Endothelial cell of umbilical vein (primary cell): ENCODE measurements at regions of chr1 and their contacts with region 1.

Region 1: GRCh38 chr1:43473463-43473862 is 19.7 kb upstream of the HYI start:
- DNase-seq: peak; percentile 46
- H3K4me3 ChIP-seq: peak overlapping the region in 1 of 3 experiments; percentile 53
- H3K27ac ChIP-seq: peak overlapping the region; percentile 100
- H3K4me1 ChIP-seq: peaks cover 60% of the 10 kb centered on the region
- H3K27me3 ChIP-seq: no peaks in the 10 kb centered on the region
- CTCF ChIP-seq: no peak
- POLR2A ChIP-seq: no peak

Region 2: DNA sequence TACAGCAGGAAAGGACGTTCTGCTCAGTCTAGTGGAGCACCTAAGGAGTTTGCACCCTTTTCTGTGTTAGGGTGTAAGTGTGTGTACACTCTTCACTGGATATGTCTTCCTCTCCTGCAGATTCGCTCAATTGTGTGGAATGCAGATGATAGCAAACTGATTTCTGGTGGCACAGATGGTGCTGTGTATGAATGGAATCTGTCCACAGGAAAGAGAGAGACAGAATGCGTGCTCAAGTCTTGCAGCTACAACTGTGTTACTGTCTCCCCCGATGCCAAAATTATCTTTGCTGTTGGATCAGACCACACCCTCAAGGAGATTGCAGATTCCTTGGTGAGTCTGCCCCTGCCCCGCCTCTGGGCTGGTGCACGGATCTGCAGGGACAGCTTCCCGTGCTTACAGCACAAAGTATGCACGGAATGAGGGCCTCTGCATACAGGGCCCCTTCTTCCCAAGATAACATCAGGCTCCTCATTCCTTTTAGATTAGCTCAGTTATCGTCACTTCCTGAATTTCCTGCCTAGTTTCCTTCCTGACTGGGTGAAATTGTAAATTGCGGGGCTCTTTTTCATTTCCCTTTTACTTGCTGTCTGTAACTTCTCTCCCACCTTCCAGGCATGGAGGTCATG is 266.7 kb before region 1 on chr1:
- CTCF ChIA-PET with region 1: no interaction called
- POLR2A ChIA-PET with region 1: no interaction called
- dilution Hi-C with region 1: no loop called
- intact Hi-C with region 1: loop called (anchors 1 kb)
- DNase-seq: no peak
- H3K4me3 ChIP-seq: peak overlapping the region in 1 of 3 experiments; percentile 7
- H3K27ac ChIP-seq: peak overlapping the region; percentile 97
- H3K4me1 ChIP-seq: peaks cover 27% of the 10 kb centered on the region
- H3K27me3 ChIP-seq: no peaks in the 10 kb centered on the region
- CTCF ChIP-seq: no peak
- POLR2A ChIP-seq: peak; percentile 92

Region 3: GRCh38 chr1:43367904-43368645 is 105.4 kb before region 1 on chr1 and contains the start of gene ELOVL1:
- CTCF ChIA-PET with region 1: no interaction called
- POLR2A ChIA-PET with region 1: no interaction called
- dilution Hi-C with region 1: no loop called
- intact Hi-C with region 1: loop called (anchors 1 kb)
- DNase-seq: peak; percentile 89
- H3K4me3 ChIP-seq: peak within 1 kb of the TSS; percentile 70 to 85 (median 72)
- H3K27ac ChIP-seq: peak within 1 kb of the TSS; percentile 57
- H3K4me1 ChIP-seq: peaks cover 30% of the 10 kb centered on the region
- H3K27me3 ChIP-seq: no peaks in the 10 kb centered on the region
- CTCF ChIP-seq: peak in 1 of 2 donors; percentile 38
- POLR2A ChIP-seq: peak; percentile 98
- total RNA-seq, gene ELOVL1: 126 and 134 TPM in 2 replicates

Region 4: GRCh38 chr1:43565600-43566360 is 92.3 kb after region 1 on chr1:
- CTCF ChIA-PET with region 1: no interaction called
- POLR2A ChIA-PET with region 1: no interaction called
- dilution Hi-C with region 1: no loop called
- intact Hi-C with region 1: loop called (anchors 1 kb)
- DNase-seq: peak; percentile 29
- H3K4me3 ChIP-seq: peak overlapping the region in 1 of 3 experiments; percentile 26
- H3K27ac ChIP-seq: no peak overlapping the region
- H3K4me1 ChIP-seq: peaks cover 12% of the 10 kb centered on the region
- H3K27me3 ChIP-seq: no peaks in the 10 kb centered on the region
- CTCF ChIP-seq: no peak
- POLR2A ChIP-seq: no peak

Region 5: GRCh38 chr1:43706598-43707495 is 233.4 kb after region 1 on chr1:
- CTCF ChIA-PET with region 1: no interaction called
- POLR2A ChIA-PET with region 1: no interaction called
- dilution Hi-C with region 1: no loop called
- intact Hi-C with region 1: loop called (anchors 2 kb)
- DNase-seq: peak; percentile 92
- H3K4me3 ChIP-seq: peak overlapping the region in 2 of 3 experiments; percentile 36 to 56
- H3K27ac ChIP-seq: no peak overlapping the region
- H3K4me1 ChIP-seq: peaks cover 36% of the 10 kb centered on the region
- H3K27me3 ChIP-seq: no peaks in the 10 kb centered on the region
- CTCF ChIP-seq: no peak
- POLR2A ChIP-seq: peak; percentile 93

Region 6: DNA sequence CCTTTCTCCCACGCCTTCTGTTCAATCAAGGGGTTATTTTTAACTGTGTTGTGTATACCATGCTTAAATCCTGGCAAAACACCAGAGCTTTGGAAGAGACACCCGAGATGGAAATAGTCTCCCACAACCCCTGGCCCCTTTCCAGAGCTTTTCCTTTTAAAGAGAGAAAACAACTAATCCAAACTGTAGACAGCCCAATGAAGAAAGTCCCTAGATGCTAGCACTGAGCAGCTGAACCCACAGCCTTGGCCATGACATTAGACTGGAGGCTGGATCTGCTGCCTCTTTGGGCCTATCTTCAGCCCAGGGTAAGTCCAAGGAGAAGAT is 395.2 kb after region 1 on chr1:
- CTCF ChIA-PET with region 1: no interaction called
- POLR2A ChIA-PET with region 1: no interaction called
- dilution Hi-C with region 1: no loop called
- intact Hi-C with region 1: no loop called
- DNase-seq: peak; percentile 11
- H3K4me3 ChIP-seq: no peak overlapping the region
- H3K27ac ChIP-seq: no peak overlapping the region
- H3K4me1 ChIP-seq: no peaks in the 10 kb centered on the region
- H3K27me3 ChIP-seq: no peaks in the 10 kb centered on the region
- CTCF ChIP-seq: no peak
- POLR2A ChIP-seq: no peak